IMR-90 (cell line): ENCODE measurements at regions of chr10 and their contacts with region 1.

Region 1: DNA sequence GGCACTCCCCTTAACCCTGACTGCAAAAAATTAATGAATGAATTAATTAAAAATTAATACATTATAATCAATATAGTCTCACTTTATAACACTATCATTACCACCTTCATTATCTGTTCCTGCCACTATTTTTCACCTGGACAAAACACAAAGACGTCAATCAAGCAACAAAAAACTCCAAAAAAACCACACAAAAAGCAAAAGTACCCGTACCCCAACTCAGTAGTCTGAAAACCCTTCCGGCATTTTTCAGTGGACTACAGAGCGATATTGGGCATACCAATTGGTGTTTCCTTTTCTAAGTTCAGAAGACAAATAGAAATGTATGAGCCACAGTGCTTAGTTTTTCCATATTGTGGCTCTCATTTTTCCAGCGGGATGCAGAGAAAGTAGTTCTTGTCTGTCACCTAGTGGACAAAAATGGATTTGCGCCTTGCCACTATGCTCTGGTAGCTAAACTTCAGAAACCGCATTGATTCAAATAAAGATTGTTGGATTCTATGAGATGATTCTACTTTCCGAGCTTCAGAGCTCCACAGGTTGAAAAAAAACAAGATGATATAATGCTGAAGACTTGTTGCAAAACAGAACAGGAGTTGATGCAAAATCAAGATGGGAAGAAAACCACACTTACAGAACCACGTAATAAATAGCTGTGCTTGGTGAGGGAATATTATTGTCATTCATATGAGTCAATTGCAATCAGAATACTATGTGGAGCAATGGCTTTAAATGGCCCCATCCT is 50.6 kb upstream of the ITGB1 start:
- DNase-seq: peak; percentile 92
- ATAC-seq: peak; percentile 43
- H3K4me3 ChIP-seq: no peak overlapping the region
- H3K27ac ChIP-seq: no peak overlapping the region; the same call in 1 of the 2 replicates
- H3K4me1 ChIP-seq: peaks cover 11% of the 10 kb centered on the region
- H3K27me3 ChIP-seq: no peaks in the 10 kb centered on the region
- CTCF ChIP-seq: peak; percentile 99
- POLR2A ChIP-seq: peak; percentile 56; the same call in 1 of the 2 replicates
- RAD21 ChIP-seq: peak; percentile 98

Region 2: GRCh38 chr10:32346134-32346550 is 662.5 kb before region 1 on chr10:
- CTCF ChIA-PET with region 1: interaction called, 3 read pairs
- POLR2A ChIA-PET with region 1: no interaction called
- dilution Hi-C with region 1: no loop called
- in situ Hi-C with region 1: no loop called
- intact Hi-C with region 1: loop called (anchors 10 kb)
- DNase-seq: peak; percentile 94
- ATAC-seq: peak; percentile 94
- H3K4me3 ChIP-seq: peak overlapping the region; percentile 90
- H3K27ac ChIP-seq: peak overlapping the region; percentile 99
- H3K4me1 ChIP-seq: no peaks in the 10 kb centered on the region; the same call in 1 of the 2 replicates
- H3K27me3 ChIP-seq: no peaks in the 10 kb centered on the region
- CTCF ChIP-seq: peak; percentile 99
- POLR2A ChIP-seq: no peak
- RAD21 ChIP-seq: peak; percentile 92

Region 3: DNA sequence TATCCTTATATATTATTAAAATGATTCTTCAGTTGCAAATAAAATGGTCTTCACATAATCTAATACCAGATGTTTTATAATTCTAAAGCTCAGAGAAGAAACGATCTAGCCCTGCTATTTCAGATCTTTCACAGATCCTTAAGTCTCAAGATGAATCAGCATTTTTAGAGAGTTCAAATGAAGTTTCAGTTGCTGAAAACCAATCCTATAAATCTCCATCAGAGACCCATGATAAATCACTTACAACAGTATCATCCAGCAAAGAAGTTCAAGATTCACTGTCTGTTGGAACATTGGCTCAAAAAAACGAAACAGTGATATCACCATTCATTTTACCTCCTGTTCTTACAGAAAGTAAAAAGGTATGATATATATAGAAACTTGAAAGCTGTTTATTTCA is 425.7 kb before region 1 on chr10:
- CTCF ChIA-PET with region 1: no interaction called
- POLR2A ChIA-PET with region 1: no interaction called
- dilution Hi-C with region 1: no loop called
- in situ Hi-C with region 1: no loop called
- intact Hi-C with region 1: no loop called
- DNase-seq: no peak
- ATAC-seq: no peak
- H3K4me3 ChIP-seq: no peak overlapping the region
- H3K27ac ChIP-seq: no peak overlapping the region
- H3K4me1 ChIP-seq: no peaks in the 10 kb centered on the region
- H3K27me3 ChIP-seq: no peaks in the 10 kb centered on the region
- CTCF ChIP-seq: no peak
- POLR2A ChIP-seq: no peak
- RAD21 ChIP-seq: no peak

Region 4: DNA sequence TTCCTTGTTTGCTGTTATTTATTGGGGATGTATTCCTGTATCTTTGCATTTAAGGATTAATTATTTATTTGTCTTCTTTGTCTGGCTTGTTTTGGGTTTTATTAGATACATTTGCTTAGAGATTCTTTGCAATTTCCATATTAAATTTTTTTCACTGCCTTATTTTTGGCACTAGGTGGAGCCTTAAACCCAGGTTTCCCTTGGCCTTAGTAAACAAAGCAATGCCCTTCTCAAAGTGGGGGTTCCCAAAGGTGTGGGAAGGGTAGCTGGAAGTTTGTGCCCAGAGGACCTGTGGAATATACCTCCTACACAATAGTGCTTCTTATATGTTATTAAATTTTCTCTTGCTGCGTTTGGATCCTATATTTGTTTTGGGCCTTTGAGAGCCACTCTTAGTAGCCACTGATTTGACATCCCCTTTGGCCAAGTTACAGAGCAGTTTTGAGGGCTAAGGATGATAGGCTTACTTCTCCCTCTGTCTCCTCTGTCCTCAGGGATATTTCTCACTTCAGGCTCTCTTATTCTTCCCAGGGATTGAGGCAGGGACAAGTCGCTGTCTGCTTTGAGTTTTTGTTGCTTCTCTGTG is 213.0 kb before region 1 on chr10:
- CTCF ChIA-PET with region 1: interaction called, 5 read pairs
- POLR2A ChIA-PET with region 1: no interaction called
- dilution Hi-C with region 1: no loop called
- in situ Hi-C with region 1: loop called (anchors 5 kb)
- intact Hi-C with region 1: loop called (anchors 1 kb)
- DNase-seq: peak; percentile 32
- ATAC-seq: peak; percentile 60
- H3K4me3 ChIP-seq: no peak overlapping the region
- H3K27ac ChIP-seq: no peak overlapping the region
- H3K4me1 ChIP-seq: no peaks in the 10 kb centered on the region
- H3K27me3 ChIP-seq: no peaks in the 10 kb centered on the region
- CTCF ChIP-seq: peak; percentile 75
- POLR2A ChIP-seq: no peak
- RAD21 ChIP-seq: peak; percentile 90

Region 5: DNA sequence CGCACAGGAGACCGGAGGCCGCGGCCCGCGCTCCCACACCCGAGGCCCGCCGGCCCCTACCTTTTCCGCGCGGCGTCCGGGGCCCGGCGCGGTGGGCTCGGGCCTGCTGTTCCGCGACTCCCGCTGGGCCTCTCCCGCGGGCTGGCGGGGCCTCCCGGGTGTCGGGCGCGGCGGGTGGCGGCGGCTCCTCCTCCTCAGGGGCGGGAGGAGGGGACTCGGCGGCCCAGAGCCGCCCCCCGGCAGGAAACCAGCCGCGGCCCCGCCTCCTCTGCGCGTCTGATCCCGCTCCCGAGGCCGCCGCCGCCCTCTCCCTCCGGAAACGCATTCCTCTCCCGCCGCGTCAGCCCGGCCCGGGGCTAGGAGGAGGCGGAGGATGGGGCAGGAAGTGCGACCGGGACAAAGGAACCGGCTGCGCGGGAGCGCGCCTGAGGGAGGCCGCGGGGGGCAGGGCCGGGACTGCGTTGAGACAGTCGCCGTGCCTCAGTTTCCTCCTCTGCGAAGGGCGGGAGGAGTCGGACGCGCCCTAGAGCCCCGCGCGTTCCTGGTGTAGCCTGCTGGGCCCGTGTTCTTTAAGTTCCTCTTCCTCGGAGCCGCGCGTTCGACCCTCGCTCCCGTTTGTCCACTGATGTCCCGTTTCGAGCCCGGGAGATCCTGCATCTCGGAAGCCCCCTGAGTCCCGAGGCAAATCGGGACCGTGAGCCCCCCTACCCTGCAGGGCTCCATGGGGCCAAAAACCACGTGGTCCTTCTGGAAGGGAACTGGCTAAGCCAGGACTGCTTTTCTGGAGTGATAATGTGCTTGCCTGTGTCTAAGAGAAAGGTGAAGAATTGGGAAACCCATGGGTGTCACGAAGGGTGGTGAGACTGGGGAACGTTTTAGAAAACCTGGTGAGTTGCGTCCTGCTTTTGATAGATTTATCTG is 50.3 kb before region 1 on chr10 and contains the start of gene ITGB1:
- CTCF ChIA-PET with region 1: interaction called, 4 read pairs
- POLR2A ChIA-PET with region 1: interaction called, 3 read pairs
- dilution Hi-C with region 1: no loop called
- in situ Hi-C with region 1: loop called (anchors 5 kb)
- intact Hi-C with region 1: loop called (anchors 1 kb)
- DNase-seq: peak; percentile 95
- ATAC-seq: peak; percentile 88
- H3K4me3 ChIP-seq: peak within 1 kb of the TSS; percentile 100
- H3K27ac ChIP-seq: peak within 1 kb of the TSS; percentile 96
- H3K4me1 ChIP-seq: peaks cover 10% of the 10 kb centered on the region
- H3K27me3 ChIP-seq: no peaks in the 10 kb centered on the region
- CTCF ChIP-seq: no peak
- POLR2A ChIP-seq: peak; percentile 95
- RAD21 ChIP-seq: peak; percentile 14; the same call in 1 of the 2 replicates
- total RNA-seq, gene ITGB1: 1,331 and 2,388 TPM in 2 replicates

Region 6: GRCh38 chr10:33125522-33126517 is 117.1 kb after region 1 on chr10:
- CTCF ChIA-PET with region 1: interaction called, 7 read pairs
- POLR2A ChIA-PET with region 1: no interaction called
- dilution Hi-C with region 1: no loop called
- in situ Hi-C with region 1: loop called (anchors 10 kb)
- intact Hi-C with region 1: no loop called
- DNase-seq: peak; percentile 64
- ATAC-seq: no peak
- H3K4me3 ChIP-seq: no peak overlapping the region
- H3K27ac ChIP-seq: peak overlapping the region; percentile 44; the same call in 1 of the 2 replicates
- H3K4me1 ChIP-seq: peaks cover 29% of the 10 kb centered on the region
- H3K27me3 ChIP-seq: no peaks in the 10 kb centered on the region
- CTCF ChIP-seq: no peak
- POLR2A ChIP-seq: no peak
- RAD21 ChIP-seq: no peak